Endothelial cell of umbilical vein (primary cell): ENCODE measurements at regions of chr2 and their contacts with region 1.

Region 1: DNA sequence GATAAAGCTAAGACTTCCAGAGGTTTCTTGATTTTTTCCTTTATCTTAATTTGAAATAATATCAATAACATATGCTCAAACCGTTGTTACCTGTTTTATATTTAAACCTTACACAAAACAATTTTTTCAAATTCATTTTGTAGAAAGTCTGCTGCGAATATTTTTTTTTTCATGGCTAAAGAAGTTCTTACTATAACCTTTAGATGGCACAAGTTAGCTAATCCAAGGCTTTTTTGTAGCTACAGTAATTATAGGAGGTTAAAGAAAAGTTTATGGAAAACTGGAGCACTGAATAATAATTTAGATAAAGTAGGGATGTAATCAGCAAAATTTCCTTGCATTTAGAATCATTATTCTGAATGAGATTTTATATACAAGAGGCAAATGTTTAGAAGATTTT is 78.0 kb upstream of the PNPT1 start:
- DNase-seq: peak; percentile 66
- H3K4me3 ChIP-seq: no peak overlapping the region
- H3K27ac ChIP-seq: peak overlapping the region; percentile 52
- H3K4me1 ChIP-seq: peaks cover 15% of the 10 kb centered on the region
- H3K27me3 ChIP-seq: no peaks in the 10 kb centered on the region
- CTCF ChIP-seq: peak; percentile 32 to 35
- POLR2A ChIP-seq: no peak

Region 2: DNA sequence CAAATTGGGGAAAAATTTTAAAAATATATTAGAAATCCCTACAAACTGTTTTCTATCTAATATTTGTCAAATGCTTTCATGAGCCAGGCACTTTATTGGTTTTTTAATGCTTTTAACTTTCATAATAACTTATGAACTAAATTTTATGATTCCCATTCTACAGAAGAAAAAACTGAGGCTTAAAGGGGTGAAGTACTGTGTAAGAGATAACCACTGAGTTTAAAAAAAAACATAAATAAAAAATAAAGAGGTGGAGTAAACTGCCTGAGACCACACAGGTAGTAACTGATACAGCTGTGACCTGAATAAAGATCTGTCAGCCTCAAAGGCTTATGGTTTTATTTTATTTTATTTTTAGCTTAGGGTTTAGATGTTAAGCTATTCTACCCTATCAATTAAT is 102.7 kb before region 1 on chr2:
- CTCF ChIA-PET with region 1: no interaction called
- POLR2A ChIA-PET with region 1: no interaction called
- dilution Hi-C with region 1: no loop called
- intact Hi-C with region 1: no loop called
- DNase-seq: no peak
- H3K4me3 ChIP-seq: no peak overlapping the region
- H3K27ac ChIP-seq: no peak overlapping the region
- H3K4me1 ChIP-seq: no peaks in the 10 kb centered on the region
- H3K27me3 ChIP-seq: no peaks in the 10 kb centered on the region
- CTCF ChIP-seq: no peak
- POLR2A ChIP-seq: no peak

Region 3: GRCh38 chr2:55809875-55810621 is 38.4 kb after region 1 on chr2:
- CTCF ChIA-PET with region 1: no interaction called
- POLR2A ChIA-PET with region 1: no interaction called
- dilution Hi-C with region 1: no loop called
- intact Hi-C with region 1: no loop called
- DNase-seq: no peak
- H3K4me3 ChIP-seq: no peak overlapping the region
- H3K27ac ChIP-seq: no peak overlapping the region
- H3K4me1 ChIP-seq: no peaks in the 10 kb centered on the region
- H3K27me3 ChIP-seq: no peaks in the 10 kb centered on the region
- CTCF ChIP-seq: no peak
- POLR2A ChIP-seq: no peak

Region 4: GRCh38 chr2:55824628-55825027 is 53.0 kb after region 1 on chr2:
- CTCF ChIA-PET with region 1: interaction called, 11 read pairs
- POLR2A ChIA-PET with region 1: no interaction called
- dilution Hi-C with region 1: no loop called
- intact Hi-C with region 1: no loop called
- DNase-seq: no peak
- H3K4me3 ChIP-seq: no peak overlapping the region
- H3K27ac ChIP-seq: no peak overlapping the region
- H3K4me1 ChIP-seq: no peaks in the 10 kb centered on the region
- H3K27me3 ChIP-seq: no peaks in the 10 kb centered on the region
- CTCF ChIP-seq: no peak
- POLR2A ChIP-seq: no peak

Region 5: DNA sequence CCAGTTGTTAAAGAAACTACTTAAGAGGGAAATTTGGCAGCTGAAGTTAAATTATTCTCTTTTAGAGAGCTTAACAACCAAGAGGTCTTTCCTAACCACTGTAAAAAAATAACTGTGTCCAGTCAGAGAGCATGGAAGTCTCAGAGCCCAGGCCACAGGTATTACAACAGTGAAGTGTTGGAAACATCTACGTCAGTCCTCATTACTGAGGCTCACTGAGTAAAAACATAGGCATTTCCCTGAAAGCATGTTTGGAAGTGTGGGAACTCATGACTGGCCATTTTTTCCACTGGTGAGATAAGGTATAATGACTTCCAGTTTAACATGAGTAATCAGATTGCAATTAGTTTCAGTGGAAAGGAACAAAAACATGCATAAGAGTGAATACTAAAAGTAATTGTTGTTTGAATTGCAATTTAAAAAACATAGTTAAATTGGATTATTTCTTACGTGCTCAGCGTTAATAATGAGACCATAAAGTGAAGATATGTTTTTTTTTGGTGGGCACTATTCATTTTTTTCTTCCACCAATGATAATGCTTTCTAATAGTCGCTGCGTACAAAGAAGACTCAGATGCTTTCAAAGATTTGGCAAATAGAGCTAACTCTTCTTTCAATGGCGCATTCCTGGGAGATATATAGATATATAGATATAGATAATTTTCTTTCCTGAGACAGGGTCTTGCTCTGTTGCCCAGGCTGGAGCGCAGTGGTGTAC is 91.2 kb after region 1 on chr2:
- CTCF ChIA-PET with region 1: interaction called, 55 read pairs
- POLR2A ChIA-PET with region 1: interaction called, 3 read pairs
- dilution Hi-C with region 1: no loop called
- intact Hi-C with region 1: no loop called
- DNase-seq: peak; percentile 98
- H3K4me3 ChIP-seq: no peak overlapping the region
- H3K27ac ChIP-seq: peak overlapping the region; percentile 92
- H3K4me1 ChIP-seq: peaks cover 54% of the 10 kb centered on the region
- H3K27me3 ChIP-seq: no peaks in the 10 kb centered on the region
- CTCF ChIP-seq: no peak
- POLR2A ChIP-seq: peak; percentile 80

Region 6: GRCh38 chr2:55923091-55923981 is 151.7 kb after region 1 on chr2 and contains the start of gene EFEMP1:
- CTCF ChIA-PET with region 1: interaction called, 7 read pairs
- POLR2A ChIA-PET with region 1: no interaction called
- dilution Hi-C with region 1: no loop called
- intact Hi-C with region 1: loop called (anchors 2 kb)
- DNase-seq: peak; percentile 87
- H3K4me3 ChIP-seq: peak within 1 kb of the TSS; percentile 57 to 97 (median 91)
- H3K27ac ChIP-seq: peak within 1 kb of the TSS; percentile 82
- H3K4me1 ChIP-seq: peaks cover 43% of the 10 kb centered on the region
- H3K27me3 ChIP-seq: no peaks in the 10 kb centered on the region
- CTCF ChIP-seq: peak in 1 of 2 donors; percentile 4
- POLR2A ChIP-seq: peak; percentile 96
- total RNA-seq, gene EFEMP1: 2,354 and 2,981 TPM in 2 replicates